Activated CD4-positive, alpha-beta memory T cell treated with anti-CD3 and anti-CD28 coated beads for 36 hours (primary cell): ENCODE measurements at regions of chr19 and their contacts with region 1.

Region 1: GRCh38 chr19:12681074-12681951 is at the start of gene DHPS:
- DNase-seq: peak; percentile 95
- H3K4me3 Mint-ChIP-seq: peak within 1 kb of the TSS; percentile 95
- H3K27ac Mint-ChIP-seq: peak within 1 kb of the TSS; percentile 94
- H3K4me1 Mint-ChIP-seq: peaks cover 22% of the 10 kb centered on the region
- H3K27me3 Mint-ChIP-seq: no peaks in the 10 kb centered on the region
- total RNA-seq, gene DHPS: 126 to 127 TPM

Region 2: GRCh38 chr19:12610540-12611360 is 70.6 kb before region 1 on chr19 and contains the starts of genes ZNF490 and ZNF791:
- CTCF ChIA-PET with region 1: interaction called, 3 read pairs
- POLR2A ChIA-PET with region 1: no interaction called
- intact Hi-C with region 1: loop called (anchors 1 kb)
- DNase-seq: peak; percentile 98
- H3K4me3 Mint-ChIP-seq: peak within 1 kb of the TSS; percentile 100
- H3K27ac Mint-ChIP-seq: peak within 1 kb of the TSS; percentile 99
- H3K4me1 Mint-ChIP-seq: peaks cover 26% of the 10 kb centered on the region
- H3K27me3 Mint-ChIP-seq: no peaks in the 10 kb centered on the region
- total RNA-seq, gene ZNF490: 6.9 to 7.0 TPM
- total RNA-seq, gene ZNF791: 18.2 to 19.1 TPM

Region 3: GRCh38 chr19:12666265-12667048 is 14.9 kb before region 1 on chr19 and contains the starts of genes MAN2B1 and WDR83:
- CTCF ChIA-PET with region 1: interaction called, 10 read pairs
- POLR2A ChIA-PET with region 1: interaction called, 11 read pairs
- intact Hi-C with region 1: loop called (anchors 1 kb)
- DNase-seq: peak; percentile 87
- H3K4me3 Mint-ChIP-seq: peak within 1 kb of the TSS; percentile 87
- H3K27ac Mint-ChIP-seq: peak within 1 kb of the TSS; percentile 87
- H3K4me1 Mint-ChIP-seq: peaks cover 47% of the 10 kb centered on the region
- H3K27me3 Mint-ChIP-seq: no peaks in the 10 kb centered on the region
- total RNA-seq, gene MAN2B1: 123 to 127 TPM
- total RNA-seq, gene WDR83: 17.1 to 17.8 TPM

Region 4: DNA sequence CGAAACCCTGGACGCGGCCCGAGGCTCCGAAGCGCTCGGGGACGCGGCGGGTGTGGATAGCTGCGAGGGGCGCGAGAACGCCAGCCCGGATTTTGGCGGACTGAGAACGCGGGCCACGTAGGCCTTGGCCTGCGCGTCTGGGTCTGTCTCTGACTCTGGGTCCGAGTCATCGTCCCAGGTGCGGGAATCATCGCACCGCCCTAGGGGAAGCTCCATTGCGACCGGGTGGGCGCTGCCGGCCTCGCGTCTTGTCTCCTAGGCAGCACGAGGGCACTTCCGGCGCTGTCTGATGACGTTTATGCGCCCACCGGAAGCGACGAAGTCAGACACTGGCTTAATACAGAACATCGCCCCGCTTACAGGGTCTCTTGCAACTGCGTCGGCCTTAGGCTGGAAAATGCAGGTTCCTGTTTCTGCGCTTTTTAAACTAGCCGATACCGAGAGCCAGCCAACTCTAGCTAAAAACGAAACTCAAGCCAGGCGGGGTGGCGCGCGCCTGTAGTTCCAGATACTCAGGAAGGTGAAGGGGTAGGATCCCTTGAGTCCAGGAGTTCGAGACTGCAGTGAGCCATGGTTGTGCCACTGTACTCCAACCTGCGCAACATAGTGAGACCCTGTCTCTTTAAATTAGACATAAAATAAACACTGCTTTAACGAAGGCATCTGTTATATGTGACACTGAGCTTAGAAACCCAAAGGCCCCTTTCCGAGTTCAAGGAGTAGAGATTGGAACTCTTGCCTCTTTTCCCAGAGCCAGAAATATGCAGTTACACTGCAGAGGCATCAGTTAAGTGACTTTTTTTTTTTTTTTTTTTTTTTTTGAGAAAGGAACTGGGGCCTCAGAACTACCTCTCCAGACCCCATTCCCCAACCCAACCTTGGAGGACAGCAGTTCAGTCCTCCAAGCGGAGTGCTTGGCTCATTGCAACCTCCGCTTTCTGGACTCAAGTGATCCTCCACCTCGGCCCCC is 15.3 kb after region 1 on chr19 and contains the start of gene FBXW9:
- CTCF ChIA-PET with region 1: interaction called, 12 read pairs
- POLR2A ChIA-PET with region 1: interaction called, 12 read pairs
- intact Hi-C with region 1: loop called (anchors 1 kb)
- DNase-seq: peak; percentile 98
- H3K4me3 Mint-ChIP-seq: peak within 1 kb of the TSS; percentile 84
- H3K27ac Mint-ChIP-seq: peak within 1 kb of the TSS; percentile 87
- H3K4me1 Mint-ChIP-seq: peaks cover 14% of the 10 kb centered on the region
- H3K27me3 Mint-ChIP-seq: no peaks in the 10 kb centered on the region
- total RNA-seq, gene FBXW9: 6.6 to 7.0 TPM

Region 5: GRCh38 chr19:12711187-12711586 is 29.9 kb after region 1 on chr19:
- CTCF ChIA-PET with region 1: no interaction called
- POLR2A ChIA-PET with region 1: no interaction called
- intact Hi-C with region 1: no loop called
- DNase-seq: no peak
- H3K4me3 Mint-ChIP-seq: no peak overlapping the region
- H3K27ac Mint-ChIP-seq: no peak overlapping the region
- H3K4me1 Mint-ChIP-seq: no peaks in the 10 kb centered on the region
- H3K27me3 Mint-ChIP-seq: no peaks in the 10 kb centered on the region